ENCODE measurements at regions of chr19 and their contacts with region 1.

Region 1: GRCh38 chr19:49097455-49098288 is 12.4 kb downstream of the SNRNP70 start:
- DNase-seq: peak; percentile 81
- ATAC-seq: peak; percentile 92
- H3K4me3 Mint-ChIP-seq: no peak overlapping the region
- H3K27ac Mint-ChIP-seq: peak overlapping the region; percentile 46
- H3K4me1 Mint-ChIP-seq: peaks cover 2% of the 10 kb centered on the region
- H3K27me3 Mint-ChIP-seq: no peaks in the 10 kb centered on the region
- CTCF ChIP-seq: peak; percentile 99

Region 2: DNA sequence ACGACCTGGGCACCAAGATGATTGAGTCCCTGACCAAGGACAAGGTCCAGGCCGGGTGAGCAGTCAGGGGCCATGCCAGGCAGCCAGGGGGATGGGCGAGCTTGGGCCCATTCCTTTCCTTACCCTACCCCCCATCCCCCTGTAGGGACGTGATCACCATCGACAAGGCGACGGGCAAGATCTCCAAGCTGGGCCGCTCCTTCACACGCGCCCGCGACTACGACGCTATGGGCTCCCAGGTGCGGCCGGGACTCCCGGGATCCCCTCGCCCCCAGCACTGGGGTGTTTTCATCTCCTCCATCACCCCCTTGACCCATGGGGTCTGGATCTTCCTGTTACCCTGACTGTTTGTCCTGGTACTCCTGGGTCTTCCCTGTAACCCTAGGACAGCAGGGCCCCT is 87.8 kb before region 1 on chr19:
- CTCF ChIA-PET with region 1: no interaction called
- POLR2A ChIA-PET with region 1: no interaction called
- intact Hi-C with region 1: no loop called
- DNase-seq: no peak
- ATAC-seq: no peak
- H3K4me3 Mint-ChIP-seq: no peak overlapping the region
- H3K27ac Mint-ChIP-seq: no peak overlapping the region
- H3K4me1 Mint-ChIP-seq: no peaks in the 10 kb centered on the region
- H3K27me3 Mint-ChIP-seq: no peaks in the 10 kb centered on the region
- CTCF ChIP-seq: no peak

Region 3: DNA sequence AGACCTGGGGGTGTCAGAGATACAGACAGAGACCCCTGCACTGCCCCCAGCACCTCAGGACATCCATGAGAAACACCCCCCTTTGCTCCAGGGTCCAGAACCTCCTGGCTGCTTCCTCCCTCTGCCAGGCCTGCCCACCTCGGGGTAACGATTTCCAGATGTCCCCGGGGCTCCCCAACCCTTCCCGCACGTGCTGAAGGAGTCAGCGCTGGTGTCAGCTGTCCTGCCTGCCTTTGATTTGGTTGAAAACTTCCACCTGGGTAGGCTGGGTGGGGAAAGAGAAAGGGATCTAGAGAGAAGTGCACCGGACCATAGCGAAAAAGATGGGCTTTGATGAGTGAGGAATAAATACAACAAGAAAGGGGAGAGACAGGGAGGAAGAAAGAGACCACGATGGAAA is 38.6 kb before region 1 on chr19:
- CTCF ChIA-PET with region 1: interaction called, 10 read pairs
- POLR2A ChIA-PET with region 1: no interaction called
- intact Hi-C with region 1: no loop called
- DNase-seq: no peak
- ATAC-seq: no peak
- H3K4me3 Mint-ChIP-seq: no peak overlapping the region
- H3K27ac Mint-ChIP-seq: no peak overlapping the region
- H3K4me1 Mint-ChIP-seq: peaks cover 18% of the 10 kb centered on the region
- H3K27me3 Mint-ChIP-seq: peaks cover 45% of the 10 kb centered on the region
- CTCF ChIP-seq: no peak

Region 4: GRCh38 chr19:49118565-49119410 is 21.1 kb after region 1 on chr19 and contains the start of gene C19orf73:
- CTCF ChIA-PET with region 1: interaction called, 29 read pairs
- POLR2A ChIA-PET with region 1: interaction called, 7 read pairs
- intact Hi-C with region 1: no loop called
- DNase-seq: peak; percentile 95
- ATAC-seq: peak; percentile 89
- H3K4me3 Mint-ChIP-seq: peak within 1 kb of the TSS; percentile 88
- H3K27ac Mint-ChIP-seq: peak within 1 kb of the TSS; percentile 91
- H3K4me1 Mint-ChIP-seq: peaks cover 28% of the 10 kb centered on the region
- H3K27me3 Mint-ChIP-seq: peaks cover 10% of the 10 kb centered on the region
- CTCF ChIP-seq: no peak
- total RNA-seq, gene C19orf73: 1.5 to 2.0 TPM

Region 5: GRCh38 chr19:49142866-49143335 is 45.2 kb after region 1 on chr19:
- CTCF ChIA-PET with region 1: interaction called, 36 read pairs
- POLR2A ChIA-PET with region 1: interaction called, 4 read pairs
- intact Hi-C with region 1: loop called (anchors 5 kb)
- DNase-seq: peak; percentile 87
- ATAC-seq: peak; percentile 87
- H3K4me3 Mint-ChIP-seq: peak overlapping the region; percentile 76
- H3K27ac Mint-ChIP-seq: no peak overlapping the region
- H3K4me1 Mint-ChIP-seq: peaks cover 10% of the 10 kb centered on the region
- H3K27me3 Mint-ChIP-seq: peaks cover 29% of the 10 kb centered on the region
- CTCF ChIP-seq: no peak

Region 6: GRCh38 chr19:49200238-49200862 is 102.7 kb after region 1 on chr19:
- CTCF ChIA-PET with region 1: interaction called, 24 read pairs
- POLR2A ChIA-PET with region 1: no interaction called
- intact Hi-C with region 1: no loop called
- DNase-seq: peak; percentile 36
- ATAC-seq: peak; percentile 71
- H3K4me3 Mint-ChIP-seq: no peak overlapping the region
- H3K27ac Mint-ChIP-seq: no peak overlapping the region
- H3K4me1 Mint-ChIP-seq: peaks cover 2% of the 10 kb centered on the region
- H3K27me3 Mint-ChIP-seq: no peaks in the 10 kb centered on the region
- CTCF ChIP-seq: no peak